ENCODE measurements at regions of chr15 and their contacts with region 1.

Region 1: GRCh38 chr15:68550481-68551295 is 28.1 kb upstream of the CORO2B start:
- DNase-seq: no peak
- H3K4me3 ChIP-seq: no peak overlapping the region
- H3K27ac ChIP-seq: no peak overlapping the region
- H3K27me3 ChIP-seq: peaks cover 8% of the 10 kb centered on the region
- CTCF ChIP-seq: peak; percentile 90

Region 2: DNA sequence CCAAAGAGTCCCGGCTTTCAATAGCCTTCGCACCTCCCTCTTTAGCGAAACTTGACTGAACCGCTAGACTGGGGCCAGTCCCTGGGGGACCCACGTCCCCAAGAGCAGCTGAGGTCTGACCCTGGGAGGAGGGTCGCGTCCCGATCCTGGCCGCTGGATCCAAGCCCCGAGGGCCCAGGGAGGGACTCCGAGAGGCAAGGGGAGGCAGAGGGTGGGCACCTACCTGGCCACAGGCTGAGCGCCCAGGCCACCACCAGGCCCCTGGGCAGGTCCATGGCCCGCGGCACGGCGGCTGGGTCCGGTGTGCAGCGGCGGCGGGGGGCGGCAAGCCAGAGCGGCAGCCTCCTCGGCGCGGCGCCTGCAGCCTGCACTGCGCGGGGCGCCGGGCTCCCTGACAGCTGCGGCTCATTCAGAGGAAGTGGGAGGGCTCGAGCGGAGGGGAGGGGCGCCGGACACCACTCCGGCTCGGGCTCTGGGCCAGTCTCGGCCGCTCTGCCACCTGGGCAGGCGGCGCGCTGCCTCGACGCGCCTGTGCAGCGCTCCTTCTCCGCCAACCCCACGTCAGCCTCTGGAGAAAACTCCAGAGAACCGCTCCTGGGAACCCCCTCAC is 118.8 kb before region 1 on chr15 and contains the start of gene ITGA11:
- CTCF ChIA-PET with region 1: interaction called, 21 read pairs
- POLR2A ChIA-PET with region 1: no interaction called
- DNase-seq: no peak
- H3K4me3 ChIP-seq: peak within 1 kb of the TSS; percentile 80
- H3K27ac ChIP-seq: no peak within 1 kb of the TSS
- H3K27me3 ChIP-seq: peaks cover 31% of the 10 kb centered on the region
- CTCF ChIP-seq: no peak
- polyA plus RNA-seq, gene ITGA11: 24.0 and 34.7 TPM in 2 replicates

Region 3: DNA sequence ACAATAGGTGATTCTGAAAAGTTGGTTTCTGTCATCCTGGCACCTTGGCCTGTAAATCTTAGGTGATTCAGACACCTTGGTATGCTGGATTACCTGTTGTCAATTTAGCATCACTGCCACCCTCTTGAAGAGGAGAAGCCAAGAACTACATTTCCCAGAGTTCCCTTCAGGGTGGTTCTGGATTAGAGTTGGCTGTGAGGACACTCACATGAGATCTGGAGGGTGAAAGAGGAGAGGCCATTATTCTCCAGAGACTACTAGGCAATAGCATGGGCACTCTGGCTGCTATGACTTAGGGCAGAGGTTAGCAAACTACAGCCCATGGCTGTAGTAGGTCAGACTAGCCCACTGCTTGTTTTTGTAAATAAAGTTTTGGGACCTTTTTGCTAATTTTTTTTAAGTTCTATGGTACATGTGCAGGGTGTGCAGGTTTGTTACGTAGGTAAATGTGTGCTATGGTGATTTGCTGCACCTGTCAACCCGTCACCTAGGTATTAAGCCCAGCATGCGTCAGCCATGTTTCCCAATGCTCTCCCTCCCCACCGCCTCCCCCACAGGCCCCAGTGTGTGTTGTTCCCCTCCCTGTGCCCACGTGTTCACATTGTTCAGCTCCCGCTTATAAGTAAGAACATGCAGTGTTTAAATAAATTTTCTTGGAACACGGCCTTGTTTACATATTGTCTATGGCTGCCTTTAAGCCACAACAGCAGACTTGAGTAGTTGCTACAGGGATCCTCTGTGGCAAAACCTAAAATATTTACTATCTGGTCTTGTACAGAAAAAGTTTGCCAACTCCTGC is 13.4 kb before region 1 on chr15:
- CTCF ChIA-PET with region 1: interaction called, 56 read pairs
- POLR2A ChIA-PET with region 1: no interaction called
- DNase-seq: peak; percentile 21
- H3K4me3 ChIP-seq: no peak overlapping the region
- H3K27ac ChIP-seq: peak overlapping the region; percentile 94
- H3K27me3 ChIP-seq: no peaks in the 10 kb centered on the region
- CTCF ChIP-seq: no peak

Region 4: GRCh38 chr15:68862415-68862814 is 311.7 kb after region 1 on chr15:
- CTCF ChIA-PET with region 1: no interaction called
- POLR2A ChIA-PET with region 1: no interaction called
- DNase-seq: no peak
- H3K4me3 ChIP-seq: no peak overlapping the region
- H3K27ac ChIP-seq: no peak overlapping the region
- H3K27me3 ChIP-seq: peaks cover 7% of the 10 kb centered on the region
- CTCF ChIP-seq: no peak

Region 5: DNA sequence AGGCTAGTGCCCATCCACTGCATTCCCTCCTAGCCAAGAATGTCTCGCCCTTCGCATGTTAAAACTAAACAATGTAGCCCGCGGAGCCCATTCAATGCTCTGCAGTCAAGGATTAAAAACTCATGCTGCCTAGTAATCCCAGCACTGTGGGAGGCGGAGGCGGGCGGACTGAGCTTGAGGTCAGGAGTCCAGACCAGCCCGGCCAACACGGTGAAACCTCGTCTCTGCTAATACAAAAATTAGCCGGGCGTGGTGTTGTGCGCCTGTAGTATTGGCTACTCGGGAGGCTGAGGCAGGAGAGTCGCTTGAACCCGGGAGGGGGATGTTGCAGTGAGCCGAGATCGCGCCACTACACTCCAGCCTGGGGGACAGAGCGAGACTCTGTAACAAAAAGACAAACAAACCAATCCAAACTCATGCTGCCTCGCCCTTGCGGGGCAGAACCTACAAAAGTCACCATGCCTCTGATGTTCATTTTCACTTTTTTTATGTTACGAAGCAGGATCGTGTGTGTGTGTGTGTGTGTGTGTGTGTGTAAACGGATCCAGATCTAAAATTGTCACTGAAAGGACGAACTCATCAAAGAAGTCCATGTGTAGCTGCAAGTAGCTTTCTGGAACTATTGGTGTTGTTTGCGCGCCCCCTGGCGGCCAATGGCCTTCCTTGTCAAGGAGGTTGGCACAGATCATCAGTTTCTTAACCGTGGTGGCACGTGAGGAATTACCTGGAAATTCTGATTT is 324.9 kb after region 1 on chr15:
- CTCF ChIA-PET with region 1: interaction called, 38 read pairs
- POLR2A ChIA-PET with region 1: no interaction called
- DNase-seq: peak; percentile 65
- H3K4me3 ChIP-seq: peak overlapping the region; percentile 57
- H3K27ac ChIP-seq: peak overlapping the region; percentile 21
- H3K27me3 ChIP-seq: peaks cover 24% of the 10 kb centered on the region
- CTCF ChIP-seq: peak; percentile 86

Measured in AG04450 (cell line).